ENCODE measurements at regions of chr18 and their contacts with region 1.

Region 1: DNA sequence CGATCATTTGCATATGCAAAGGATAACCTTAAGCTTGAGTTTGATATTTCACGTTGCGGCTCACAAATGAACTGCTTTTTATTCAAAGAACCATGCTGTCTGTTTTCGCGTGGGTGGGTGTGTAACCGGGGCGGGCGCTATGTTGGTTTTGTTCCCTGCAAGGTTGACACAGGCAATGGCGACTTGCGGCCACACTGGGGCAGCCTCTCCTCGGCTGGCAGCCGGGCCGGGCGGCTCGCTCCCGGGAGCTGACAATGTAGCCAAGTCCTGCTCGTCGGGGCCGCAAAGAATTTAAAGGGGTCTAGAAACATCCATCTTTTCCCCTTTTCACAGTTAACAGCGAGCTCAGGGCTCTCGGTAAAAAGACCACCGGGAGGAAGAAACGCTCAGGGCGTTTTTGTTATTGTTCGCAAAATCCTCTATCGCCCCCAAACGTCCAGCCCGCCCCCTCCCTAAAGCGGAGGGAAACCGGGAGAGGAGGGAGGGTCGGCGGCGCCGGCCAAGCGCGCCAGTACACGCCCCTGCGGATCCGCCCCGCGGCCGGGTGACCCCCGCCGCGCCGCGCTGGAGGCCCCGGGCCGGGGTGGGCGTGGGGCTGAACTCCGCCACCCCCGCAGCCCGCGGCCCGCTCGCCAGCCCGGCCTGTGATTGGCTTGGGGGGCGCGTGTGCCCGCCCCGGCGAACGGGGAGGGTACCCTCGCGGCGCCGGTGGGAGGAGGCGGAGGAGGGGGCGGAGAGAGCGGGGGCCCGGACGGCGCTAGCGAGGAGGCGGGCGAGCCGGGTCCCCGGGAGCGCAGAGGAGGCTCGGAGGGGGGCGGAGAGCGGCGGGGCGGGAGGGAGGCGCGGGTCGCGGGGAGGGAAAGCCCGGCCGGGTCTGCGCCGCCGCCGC is at the start of gene NEDD4L:
- DNase-seq: peak; percentile 96
- H3K4me3 ChIP-seq: peak within 1 kb of the TSS; percentile 87 to 97 (median 92)
- H3K27ac ChIP-seq: peak within 1 kb of the TSS; percentile 82 to 90 (median 87)
- H3K4me1 ChIP-seq: peaks cover 4 to 43% (median 40%) of the 10 kb centered on the region in 4 donors
- H3K27me3 ChIP-seq: no peaks in the 10 kb centered on the region
- CTCF ChIP-seq: peak; percentile 78 to 97 (median 87)
- EP300 ChIP-seq: no peak
- POLR2A ChIP-seq: no peak
- total RNA-seq, gene NEDD4L: 22.7 to 39.9 (median 34.7) TPM

Region 2: GRCh38 chr18:57621246-57621604 is 422.5 kb before region 1 on chr18:
- intact Hi-C with region 1: loop called (anchors 10 kb)
- DNase-seq: no peak
- H3K4me3 ChIP-seq: peak overlapping the region; percentile 69 to 96 (median 88)
- H3K27ac ChIP-seq: peak overlapping the region; percentile 90 to 97 (median 94)
- H3K4me1 ChIP-seq: peaks cover 25 to 32% (median 27%) of the 10 kb centered on the region in 4 donors
- H3K27me3 ChIP-seq: no peaks in the 10 kb centered on the region
- CTCF ChIP-seq: no peak
- EP300 ChIP-seq: no peak
- POLR2A ChIP-seq: no peak

Region 3: GRCh38 chr18:57705826-57706554 is 337.7 kb before region 1 on chr18:
- intact Hi-C with region 1: no loop called
- DNase-seq: no peak
- H3K4me3 ChIP-seq: no peak overlapping the region
- H3K27ac ChIP-seq: no peak overlapping the region
- H3K4me1 ChIP-seq: peaks cover 0 to 36% (median 33%) of the 10 kb centered on the region in 4 donors
- H3K27me3 ChIP-seq: no peaks in the 10 kb centered on the region
- CTCF ChIP-seq: no peak
- EP300 ChIP-seq: no peak
- POLR2A ChIP-seq: no peak

Region 4: DNA sequence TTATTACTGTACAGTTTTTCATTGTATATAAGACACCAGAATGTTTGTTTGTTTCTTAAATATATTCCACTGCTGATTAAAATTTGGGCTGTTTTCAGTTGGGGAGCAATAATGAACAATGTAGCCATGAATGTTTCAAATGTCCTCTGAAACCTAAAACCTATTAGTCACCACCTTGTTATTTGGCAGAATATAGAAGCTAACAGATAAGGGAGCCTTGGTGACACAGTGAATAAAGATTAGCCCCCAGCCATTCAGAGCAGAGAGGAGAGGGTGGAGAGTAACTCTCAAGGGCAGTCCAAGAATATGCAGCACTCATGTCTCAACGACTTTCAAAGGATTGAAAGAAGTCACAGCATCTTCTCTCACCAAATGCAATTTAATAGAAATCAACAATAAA is 197.5 kb before region 1 on chr18:
- intact Hi-C with region 1: no loop called
- DNase-seq: no peak
- H3K4me3 ChIP-seq: no peak overlapping the region
- H3K27ac ChIP-seq: no peak overlapping the region
- H3K4me1 ChIP-seq: peaks cover 0 to 4% (median 0%) of the 10 kb centered on the region in 4 donors
- H3K27me3 ChIP-seq: no peaks in the 10 kb centered on the region
- CTCF ChIP-seq: no peak
- EP300 ChIP-seq: no peak
- POLR2A ChIP-seq: no peak

Region 5: DNA sequence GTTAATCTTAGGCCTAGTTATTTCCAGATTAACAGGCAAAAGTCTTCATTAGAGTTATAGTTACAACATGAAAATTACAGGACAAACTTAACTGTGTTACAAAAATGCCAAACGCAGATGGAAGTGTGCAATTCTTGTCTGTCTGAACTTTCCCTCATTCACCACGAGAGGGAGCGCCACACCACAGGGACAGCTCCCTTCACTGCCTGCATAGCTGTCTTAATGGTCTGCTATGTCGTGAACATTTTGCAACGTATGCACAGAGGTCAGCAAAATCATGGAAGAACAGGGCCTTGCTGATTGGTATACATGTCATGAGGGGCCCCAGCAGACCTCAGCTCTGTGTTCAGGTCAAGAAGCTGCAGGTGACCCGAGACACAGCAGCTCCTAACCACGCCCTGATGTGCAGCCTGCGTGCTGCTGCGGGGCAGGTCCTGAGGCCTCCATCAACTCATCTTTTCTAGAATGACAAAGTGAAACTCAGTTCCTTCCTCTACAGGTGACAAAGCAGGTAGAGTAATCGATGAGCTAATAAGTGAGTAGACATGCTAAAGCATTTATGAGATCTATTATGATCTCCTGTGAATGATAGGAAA is 161.8 kb before region 1 on chr18:
- intact Hi-C with region 1: loop called (anchors 5 kb)
- DNase-seq: no peak
- H3K4me3 ChIP-seq: no peak overlapping the region
- H3K27ac ChIP-seq: no peak overlapping the region
- H3K4me1 ChIP-seq: peaks cover 0 to 7% (median 6%) of the 10 kb centered on the region in 4 donors
- H3K27me3 ChIP-seq: no peaks in the 10 kb centered on the region
- CTCF ChIP-seq: peak; percentile 86 to 89 (median 88)
- EP300 ChIP-seq: no peak
- POLR2A ChIP-seq: no peak

Region 6: DNA sequence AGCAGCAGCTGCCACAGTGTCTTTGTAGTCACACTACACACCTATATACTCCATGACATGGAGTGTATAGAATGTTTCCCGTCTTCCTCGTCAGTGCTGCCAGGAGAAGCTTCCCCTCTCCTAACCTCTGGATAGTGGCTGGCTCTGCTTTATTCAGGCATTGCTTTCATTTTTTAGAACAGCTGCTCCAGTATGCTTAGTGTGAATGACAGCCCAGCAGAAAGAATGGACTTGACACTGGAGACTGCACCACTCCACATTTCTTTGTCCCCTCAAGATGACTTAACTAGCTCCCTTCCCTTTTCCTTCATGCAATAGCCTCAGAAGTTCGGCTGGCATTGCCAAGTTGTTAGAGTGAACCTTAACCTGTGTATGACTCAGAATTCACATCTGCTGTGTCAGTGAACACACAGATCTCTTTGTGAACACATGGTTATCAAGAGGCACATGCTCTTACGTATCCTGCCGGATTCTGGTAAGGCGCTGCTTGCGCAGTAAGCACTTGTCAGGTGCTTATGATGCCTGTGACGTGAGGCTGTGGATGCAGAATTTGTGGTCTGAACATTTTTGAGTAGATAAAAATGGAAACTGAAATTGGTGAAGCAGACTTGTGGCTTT is 74.2 kb after region 1 on chr18:
- intact Hi-C with region 1: loop called (anchors 1 kb)
- DNase-seq: no peak
- H3K4me3 ChIP-seq: no peak overlapping the region
- H3K27ac ChIP-seq: peak overlapping the region in 2 of 4 donors; percentile 9 to 13
- H3K4me1 ChIP-seq: peaks cover 0 to 20% (median 18%) of the 10 kb centered on the region in 4 donors
- H3K27me3 ChIP-seq: no peaks in the 10 kb centered on the region
- CTCF ChIP-seq: no peak
- EP300 ChIP-seq: peak; percentile 58
- POLR2A ChIP-seq: no peak

Region 7: GRCh38 chr18:58180738-58181353 is 137.1 kb after region 1 on chr18:
- intact Hi-C with region 1: loop called (anchors 5 kb)
- DNase-seq: no peak
- H3K4me3 ChIP-seq: no peak overlapping the region
- H3K27ac ChIP-seq: no peak overlapping the region
- H3K4me1 ChIP-seq: peaks cover 0 to 51% (median 42%) of the 10 kb centered on the region in 4 donors
- H3K27me3 ChIP-seq: no peaks in the 10 kb centered on the region
- CTCF ChIP-seq: peak; percentile 70 to 90 (median 77)
- EP300 ChIP-seq: no peak
- POLR2A ChIP-seq: no peak

Region 8: GRCh38 chr18:58316396-58317342 is 272.9 kb after region 1 on chr18:
- intact Hi-C with region 1: loop called (anchors 5 kb)
- DNase-seq: no peak
- H3K4me3 ChIP-seq: no peak overlapping the region
- H3K27ac ChIP-seq: peak overlapping the region; percentile 77 to 81 (median 78)
- H3K4me1 ChIP-seq: peaks cover 41 to 58% (median 54%) of the 10 kb centered on the region in 4 donors
- H3K27me3 ChIP-seq: no peaks in the 10 kb centered on the region
- CTCF ChIP-seq: no peak
- EP300 ChIP-seq: peak; percentile 11
- POLR2A ChIP-seq: no peak

Region 9: GRCh38 chr18:58493516-58494253 is 449.9 kb after region 1 on chr18:
- intact Hi-C with region 1: loop called (anchors 5 kb)
- DNase-seq: peak; percentile 94
- H3K4me3 ChIP-seq: peak overlapping the region; percentile 23 to 38 (median 31)
- H3K27ac ChIP-seq: peak overlapping the region; percentile 34 to 71 (median 66)
- H3K4me1 ChIP-seq: peaks cover 29 to 75% (median 67%) of the 10 kb centered on the region in 4 donors
- H3K27me3 ChIP-seq: no peaks in the 10 kb centered on the region
- CTCF ChIP-seq: peak; percentile 80 to 90 (median 88)
- EP300 ChIP-seq: no peak
- POLR2A ChIP-seq: no peak

Measured in esophagus muscularis mucosa (tissue), 4 donors.